Mammary epithelial cell (primary cell): ENCODE measurements at regions of chr2 and their contacts with region 1.

Region 1: DNA sequence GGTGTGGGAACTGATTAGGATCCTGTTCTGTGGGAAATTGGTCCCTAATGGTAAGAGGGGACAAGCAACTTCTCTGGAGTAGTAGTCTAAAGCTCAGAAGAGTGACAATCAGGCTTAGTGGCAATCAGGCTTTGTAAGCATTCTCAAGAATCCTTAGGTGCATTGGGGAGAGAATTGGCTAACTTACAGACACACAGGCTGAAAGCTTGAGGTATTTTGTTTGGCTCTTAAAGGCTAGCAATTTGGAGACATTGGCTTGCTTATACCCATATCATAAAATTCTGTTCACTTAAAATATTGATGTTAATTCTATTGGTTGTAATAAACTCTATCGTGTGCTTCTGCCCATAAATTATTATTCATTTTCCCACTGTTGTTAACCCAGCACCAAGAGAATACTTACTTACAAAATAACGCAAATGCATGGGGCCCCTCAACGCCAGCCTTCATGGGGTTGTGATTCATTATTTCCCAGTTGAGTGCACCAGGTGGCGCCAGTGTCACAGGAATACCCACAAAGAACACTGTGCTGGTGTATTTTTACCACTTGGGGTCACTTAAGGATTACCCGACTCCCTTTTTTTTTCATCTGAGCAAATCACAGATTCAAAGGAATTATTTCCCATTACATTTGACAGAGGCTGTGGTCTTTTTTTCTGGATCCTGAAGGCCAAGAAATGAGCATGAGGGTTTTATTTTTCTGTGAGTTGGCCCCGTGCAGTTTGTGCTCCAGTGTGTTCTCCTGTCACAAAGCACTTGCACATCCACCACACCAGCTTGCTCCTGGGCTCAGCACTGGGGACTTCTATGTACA is 45.5 kb downstream of the DDX1 start:
- DNase-seq: peak; percentile 40
- H3K4me3 ChIP-seq: no peak overlapping the region
- H3K27ac ChIP-seq: no peak overlapping the region
- H3K4me1 ChIP-seq: peaks cover 10% of the 10 kb centered on the region
- H3K27me3 ChIP-seq: no peaks in the 10 kb centered on the region
- CTCF ChIP-seq: peak; percentile 84 to 86

Region 2: DNA sequence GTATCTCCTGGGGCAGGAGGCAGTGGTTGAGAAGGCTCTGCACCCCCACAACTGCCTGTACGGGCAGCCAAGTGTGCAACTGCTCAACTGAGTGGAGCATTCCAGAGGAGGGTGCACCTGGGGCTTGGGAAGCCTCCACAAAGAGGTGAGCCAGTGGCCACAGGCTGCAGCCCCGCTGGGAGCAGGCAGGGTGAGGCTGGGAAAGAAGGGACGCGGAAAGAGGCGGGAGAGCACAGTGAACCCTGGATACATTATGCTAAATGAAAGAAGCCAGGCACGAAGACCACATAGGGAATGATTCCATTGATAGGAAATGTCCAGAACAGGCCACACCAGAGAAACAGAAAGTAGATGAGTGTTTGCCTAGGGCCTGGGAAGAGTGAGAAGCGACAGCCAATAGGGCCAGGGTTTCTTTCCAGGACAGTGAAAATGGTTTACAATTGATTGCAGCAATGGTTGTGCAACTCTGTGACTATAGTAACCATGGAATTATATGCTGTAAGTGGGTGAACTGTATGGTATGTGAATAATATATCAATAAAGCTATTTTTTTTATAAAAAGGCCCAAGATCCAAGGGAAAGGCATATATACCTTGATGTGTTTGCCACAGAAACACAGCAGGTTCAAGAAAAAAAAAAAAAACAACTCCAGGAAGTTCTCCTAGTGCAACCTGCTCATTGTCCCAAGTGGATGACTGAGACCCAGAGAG is 36.9 kb after region 1 on chr2:
- CTCF ChIA-PET with region 1: no interaction called
- dilution Hi-C with region 1: no loop called
- in situ Hi-C with region 1: no loop called
- intact Hi-C with region 1: no loop called
- DNase-seq: no peak
- H3K4me3 ChIP-seq: no peak overlapping the region
- H3K27ac ChIP-seq: no peak overlapping the region
- H3K4me1 ChIP-seq: peaks cover 23% of the 10 kb centered on the region
- H3K27me3 ChIP-seq: no peaks in the 10 kb centered on the region
- CTCF ChIP-seq: no peak

Region 3: DNA sequence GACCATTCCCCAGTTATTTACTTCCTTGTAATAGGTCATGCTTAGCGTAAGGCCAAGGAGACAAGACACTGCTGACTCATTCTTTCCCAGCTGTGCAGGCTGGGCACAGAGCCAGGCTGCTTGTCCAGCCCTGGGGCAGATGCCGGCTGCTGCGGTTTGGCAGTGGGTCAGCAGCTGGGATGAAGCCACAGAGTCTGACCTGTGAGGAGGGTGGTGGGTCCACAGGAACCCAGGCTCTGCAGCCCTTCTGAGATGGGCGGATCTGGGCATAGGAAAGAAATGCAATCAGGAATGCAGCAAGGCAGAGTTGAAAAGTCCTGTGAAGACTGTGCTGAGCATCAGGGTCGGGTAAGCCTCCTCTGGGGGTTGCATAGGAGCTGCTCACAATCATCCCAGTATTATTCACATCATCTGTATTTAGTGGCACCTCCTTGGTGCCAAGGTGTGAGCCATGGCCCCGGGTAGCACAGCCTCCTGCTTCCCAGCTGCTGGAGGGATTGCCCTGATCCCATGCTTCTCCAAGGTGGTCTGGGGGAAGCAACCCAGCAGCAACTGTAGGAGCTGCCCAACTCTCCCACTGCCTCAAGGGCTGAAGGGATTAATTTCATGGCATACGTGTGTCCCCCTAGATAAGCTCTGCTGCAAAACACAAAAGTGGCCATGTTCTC is 93.5 kb after region 1 on chr2:
- CTCF ChIA-PET with region 1: no interaction called
- dilution Hi-C with region 1: no loop called
- in situ Hi-C with region 1: no loop called
- intact Hi-C with region 1: loop called (anchors 5 kb)
- DNase-seq: peak; percentile 87
- H3K4me3 ChIP-seq: no peak overlapping the region
- H3K27ac ChIP-seq: no peak overlapping the region
- H3K4me1 ChIP-seq: peaks cover 9% of the 10 kb centered on the region
- H3K27me3 ChIP-seq: peaks cover 13% of the 10 kb centered on the region
- CTCF ChIP-seq: no peak

Region 4: GRCh38 chr2:15939854-15940660 is 302.9 kb after region 1 on chr2 and contains the start of gene MYCN:
- CTCF ChIA-PET with region 1: interaction called, 4 read pairs
- dilution Hi-C with region 1: no loop called
- in situ Hi-C with region 1: loop called in 1 of 2 experiments (anchors 25 kb)
- intact Hi-C with region 1: loop called (anchors 1 kb)
- DNase-seq: peak; percentile 76
- H3K4me3 ChIP-seq: peak within 1 kb of the TSS in 1 of 3 experiments; percentile 12
- H3K27ac ChIP-seq: no peak within 1 kb of the TSS
- H3K4me1 ChIP-seq: no peaks in the 10 kb centered on the region
- H3K27me3 ChIP-seq: peaks cover 29% of the 10 kb centered on the region
- CTCF ChIP-seq: peak in 1 of 2 donors; percentile 68
- total RNA-seq, gene MYCN: 0.50 TPM in 1 of 2 donors, not detected in the other

Region 5: DNA sequence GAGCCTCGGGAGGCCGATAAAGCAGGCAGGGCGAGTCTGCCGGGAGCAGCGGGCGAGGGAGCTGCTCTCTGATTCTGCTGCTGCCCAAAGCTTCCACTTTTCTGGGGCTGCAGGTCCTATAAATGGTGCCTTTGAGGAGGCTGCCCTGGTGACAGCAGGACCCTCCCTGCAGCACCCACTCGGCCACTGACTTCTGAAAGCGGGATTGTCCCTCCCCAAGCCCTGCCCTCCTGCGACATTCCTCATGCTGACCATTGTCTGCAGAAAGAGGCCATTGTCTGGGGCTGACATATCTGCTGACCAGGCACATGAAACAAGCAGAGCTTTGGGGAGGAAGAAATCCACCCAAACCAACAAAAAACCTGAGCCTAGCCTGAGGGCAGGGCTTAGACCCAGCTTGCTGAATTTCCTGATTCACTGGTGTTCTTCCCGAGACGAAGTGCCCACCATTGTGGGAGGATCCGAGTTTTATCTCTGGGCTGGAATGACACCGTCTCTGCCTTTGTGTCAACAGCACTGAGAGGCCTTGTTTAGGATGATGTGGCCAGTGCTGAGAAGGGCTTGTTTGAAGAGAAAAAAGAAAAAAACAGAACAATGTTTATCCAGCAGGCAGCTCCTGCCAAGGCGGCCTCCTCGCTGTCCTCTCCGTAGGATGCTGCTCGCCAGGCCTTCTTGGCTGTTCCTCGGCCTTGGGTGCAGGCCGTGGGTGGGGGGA is 432.9 kb after region 1 on chr2:
- CTCF ChIA-PET with region 1: no interaction called
- dilution Hi-C with region 1: no loop called
- in situ Hi-C with region 1: no loop called
- intact Hi-C with region 1: no loop called
- DNase-seq: peak; percentile 11
- H3K4me3 ChIP-seq: no peak overlapping the region
- H3K27ac ChIP-seq: no peak overlapping the region
- H3K4me1 ChIP-seq: no peaks in the 10 kb centered on the region
- H3K27me3 ChIP-seq: no peaks in the 10 kb centered on the region
- CTCF ChIP-seq: no peak

Region 6: DNA sequence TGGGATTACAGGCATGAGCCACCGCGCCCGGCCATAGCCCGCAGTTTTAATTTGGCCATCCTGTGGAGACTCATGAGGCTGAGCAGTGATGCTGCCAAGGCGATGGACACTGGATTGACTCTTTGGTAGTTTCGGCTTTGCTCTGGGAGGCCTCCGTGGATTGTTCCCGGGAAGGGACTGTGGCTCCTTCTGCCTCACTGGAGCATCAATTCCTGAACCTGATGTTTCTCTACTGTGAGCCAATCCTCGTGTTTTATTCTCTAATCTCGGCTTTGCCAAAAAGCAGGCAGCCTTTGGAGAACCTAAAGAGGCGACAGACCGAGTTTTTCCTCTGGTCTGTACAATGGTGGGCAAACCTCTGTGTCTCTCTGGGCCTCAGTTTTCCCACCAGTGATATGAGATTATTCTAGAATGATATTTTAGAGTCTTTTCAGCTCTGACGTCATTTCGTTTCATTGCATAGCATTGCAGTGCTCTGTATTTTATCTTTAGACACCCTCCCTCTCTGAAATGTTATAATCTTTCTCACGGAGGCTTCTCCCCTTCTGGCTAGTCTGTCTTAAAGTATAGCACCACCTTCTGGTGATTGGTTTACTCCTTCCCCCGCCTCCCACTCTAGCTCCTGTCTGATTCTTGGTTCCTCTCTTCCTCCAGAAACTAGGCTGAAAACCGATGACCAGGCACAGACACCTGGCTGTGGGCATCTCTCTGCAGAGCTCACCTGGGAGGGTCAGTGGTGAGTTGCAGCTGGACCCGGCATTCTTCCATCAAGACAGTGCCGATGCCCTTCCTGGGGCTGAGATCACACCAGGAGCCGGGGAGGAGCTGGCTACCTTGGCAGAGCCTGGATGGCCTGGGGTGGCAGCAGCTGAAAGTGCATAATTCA is 644.5 kb after region 1 on chr2:
- CTCF ChIA-PET with region 1: no interaction called
- dilution Hi-C with region 1: no loop called
- in situ Hi-C with region 1: no loop called
- intact Hi-C with region 1: loop called (anchors 2 kb)
- DNase-seq: peak; percentile 32
- H3K4me3 ChIP-seq: no peak overlapping the region
- H3K27ac ChIP-seq: no peak overlapping the region
- H3K4me1 ChIP-seq: no peaks in the 10 kb centered on the region
- H3K27me3 ChIP-seq: no peaks in the 10 kb centered on the region
- CTCF ChIP-seq: peak in 1 of 2 donors; percentile 13

Region 7: DNA sequence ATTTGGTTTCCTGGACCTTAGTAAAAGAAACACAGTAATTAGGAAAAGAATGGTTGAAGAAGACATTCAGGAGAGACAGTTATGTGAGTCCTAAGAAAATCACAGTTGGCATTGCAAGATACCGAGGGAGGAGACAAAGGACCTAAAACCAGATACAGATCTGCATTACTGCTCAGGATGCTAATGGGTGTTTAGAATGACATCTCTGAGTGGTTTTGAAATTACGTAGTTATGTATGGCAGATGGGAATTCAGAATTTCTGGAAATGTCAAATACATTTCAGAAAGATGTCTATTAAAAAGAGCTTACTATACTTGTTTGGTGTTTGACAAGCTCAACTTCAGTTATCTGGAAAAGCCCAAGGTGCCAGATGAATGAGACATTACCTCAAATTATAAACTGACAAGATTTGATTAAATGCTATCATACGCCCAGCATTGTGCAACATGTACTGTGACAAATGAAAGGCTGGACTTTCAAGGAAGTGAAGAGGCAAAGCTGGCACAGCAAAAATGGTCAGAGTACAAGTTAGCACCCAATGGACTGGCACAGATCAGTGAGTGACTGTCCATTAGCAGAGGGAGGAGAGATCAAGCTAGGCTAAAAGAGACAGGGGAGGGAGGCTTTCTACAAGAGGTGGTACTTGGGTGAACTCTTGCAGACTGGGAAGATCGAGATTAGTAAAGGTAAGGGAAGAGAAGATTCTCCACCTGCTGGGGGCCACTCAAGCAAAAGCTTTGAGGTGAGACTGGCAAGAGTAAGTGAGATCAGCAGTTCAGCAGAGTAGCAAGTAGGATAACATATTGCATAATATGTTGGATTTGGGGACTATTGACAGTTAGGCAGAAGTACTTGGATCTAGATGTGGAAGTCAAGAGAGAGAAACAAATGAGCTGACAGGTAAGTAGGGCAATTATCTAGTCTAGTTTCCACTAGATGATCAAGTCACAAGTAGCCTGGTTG is 859.5 kb after region 1 on chr2:
- CTCF ChIA-PET with region 1: no interaction called
- dilution Hi-C with region 1: no loop called
- in situ Hi-C with region 1: loop called in 1 of 2 experiments (anchors 10 kb)
- intact Hi-C with region 1: no loop called
- DNase-seq: no peak
- H3K4me3 ChIP-seq: no peak overlapping the region
- H3K27ac ChIP-seq: no peak overlapping the region
- H3K4me1 ChIP-seq: no peaks in the 10 kb centered on the region
- H3K27me3 ChIP-seq: no peaks in the 10 kb centered on the region
- CTCF ChIP-seq: no peak

Region 8: GRCh38 chr2:16608661-16609643 is 971.8 kb after region 1 on chr2:
- CTCF ChIA-PET with region 1: no interaction called
- dilution Hi-C with region 1: no loop called
- in situ Hi-C with region 1: loop called (anchors 10 to 25 kb)
- intact Hi-C with region 1: no loop called
- DNase-seq: peak; percentile 61
- H3K4me3 ChIP-seq: peak overlapping the region; percentile 16 to 40 (median 26)
- H3K27ac ChIP-seq: no peak overlapping the region
- H3K4me1 ChIP-seq: peaks cover 3% of the 10 kb centered on the region
- H3K27me3 ChIP-seq: no peaks in the 10 kb centered on the region
- CTCF ChIP-seq: peak; percentile 95 to 97